T-cell (primary cell): ENCODE measurements at regions of chr12 and their contacts with region 1.

Region 1: DNA sequence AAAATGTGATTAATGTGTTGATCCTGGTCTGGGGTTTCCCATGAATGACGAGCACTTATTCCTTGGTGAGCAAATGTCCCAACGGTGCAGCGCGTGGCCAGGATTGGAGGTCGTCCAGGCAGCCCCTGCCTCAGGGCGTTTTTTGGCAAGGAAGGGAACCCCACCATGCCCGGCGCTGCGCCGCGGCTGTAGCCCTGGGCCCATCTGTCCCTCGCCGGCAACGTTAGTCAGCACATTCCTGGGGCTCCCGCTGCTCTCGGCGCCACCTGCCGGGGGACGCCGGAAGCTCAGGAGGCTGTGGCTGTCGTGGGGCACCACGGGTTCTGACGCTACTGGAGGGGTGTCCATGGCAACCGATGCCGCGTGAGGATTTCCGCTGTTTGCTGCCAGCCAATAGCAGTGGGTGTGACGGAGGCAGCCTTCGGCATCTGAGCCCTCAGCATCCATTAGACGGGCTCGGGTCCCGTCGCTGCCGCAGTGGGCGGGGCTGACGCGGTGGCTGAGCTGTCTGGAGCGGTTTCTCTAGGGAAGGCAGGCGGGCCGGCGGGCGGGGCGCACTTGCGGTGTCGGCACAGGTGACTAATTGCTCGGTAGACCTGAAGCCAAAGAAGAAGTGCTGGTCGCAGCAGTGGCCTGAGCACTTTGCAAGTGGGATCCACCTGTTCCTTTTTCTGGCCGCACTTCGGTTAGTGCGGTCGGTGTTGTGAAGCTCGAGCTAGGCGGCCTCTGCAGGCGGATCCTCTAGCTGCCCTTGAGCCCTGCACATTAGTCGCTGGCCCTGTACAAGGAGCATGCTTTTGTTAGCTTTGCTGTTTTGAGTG is 29.5 kb downstream of the RAB35 start:
- DNase-seq: peak; percentile 98 to 100 (median 99)
- ATAC-seq: peak; percentile 95 to 97 (median 96)
- H3K4me3 ChIP-seq: peak overlapping the region; percentile 47 to 50
- H3K4me3 Mint-ChIP-seq: peak overlapping the region; percentile 66 to 74 (median 67)
- H3K27ac ChIP-seq: peak overlapping the region; percentile 72
- H3K27ac Mint-ChIP-seq: peak overlapping the region; percentile 83 to 86
- H3K4me1 ChIP-seq: peaks cover 6 to 13% of the 10 kb centered on the region in 2 experiments
- H3K4me1 Mint-ChIP-seq: peaks cover 14 to 32% (median 17%) of the 10 kb centered on the region in 3 donors
- H3K27me3 ChIP-seq: no peaks in the 10 kb centered on the region
- H3K27me3 Mint-ChIP-seq: no peaks in the 10 kb centered on the region

Region 2: DNA sequence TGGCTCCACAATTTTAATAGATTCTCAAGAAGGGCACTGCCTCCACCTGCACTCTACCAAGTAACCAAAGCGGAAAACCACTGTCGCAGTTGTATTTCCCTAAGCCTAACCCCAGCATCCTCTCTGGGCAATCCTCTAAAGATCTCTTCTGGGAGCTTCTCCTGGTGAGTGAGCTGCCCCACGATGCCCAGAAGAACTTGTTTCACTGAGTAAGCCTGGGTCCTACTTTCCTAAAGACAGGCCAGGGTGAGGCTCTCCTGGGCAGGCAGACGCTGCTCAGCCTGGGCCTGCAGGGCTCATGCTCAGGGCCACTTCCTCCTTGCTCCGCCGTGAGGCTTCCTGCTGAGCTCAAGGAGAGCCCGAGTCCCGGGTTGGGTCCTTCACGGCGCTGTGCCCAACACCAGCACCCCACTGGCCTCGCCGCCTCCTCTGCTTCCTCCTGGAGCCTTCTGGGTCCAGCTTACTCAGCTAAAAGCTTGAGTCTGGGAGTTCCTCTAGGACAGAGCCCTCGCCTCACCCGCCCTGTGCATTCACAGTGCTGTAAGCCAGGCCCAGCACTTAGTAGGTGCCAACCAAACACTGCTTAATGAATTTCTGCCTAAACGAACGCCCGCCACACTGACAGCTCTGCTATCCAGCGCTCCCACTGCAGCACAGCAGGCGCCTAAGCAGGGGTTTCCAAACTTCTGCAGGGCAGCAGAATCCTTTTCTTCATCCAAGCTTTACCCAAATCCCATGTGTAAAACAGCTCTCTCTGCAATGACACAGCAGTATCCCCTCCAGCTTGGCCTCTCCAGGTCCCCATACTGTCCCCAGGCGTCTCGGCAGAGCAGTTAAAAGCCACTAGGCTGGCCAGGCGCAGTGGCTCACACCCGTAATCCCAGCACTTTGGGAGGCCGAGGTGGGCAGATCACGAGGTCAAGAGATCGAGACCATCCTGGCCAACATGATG is 23.8 kb after region 1 on chr12:
- CTCF ChIA-PET with region 1: interaction called in 1 of 2 experiments, 12 read pairs
- POLR2A ChIA-PET with region 1: no interaction called
- DNase-seq: peak in 34 of 35 experiments; percentile 25 to 66 (median 39)
- ATAC-seq: peak; percentile 82 to 91 (median 86)
- H3K4me3 ChIP-seq: peak overlapping the region; percentile 35
- H3K4me3 Mint-ChIP-seq: peak overlapping the region; percentile 44 to 80 (median 67)
- H3K27ac ChIP-seq: peak overlapping the region; percentile 60
- H3K27ac Mint-ChIP-seq: peak overlapping the region; percentile 83 to 87
- H3K4me1 ChIP-seq: peaks cover 34 to 71% of the 10 kb centered on the region in 2 experiments
- H3K4me1 Mint-ChIP-seq: peaks cover 71 to 79% (median 75%) of the 10 kb centered on the region in 3 donors
- H3K27me3 ChIP-seq: no peaks in the 10 kb centered on the region
- H3K27me3 Mint-ChIP-seq: no peaks in the 10 kb centered on the region